AG04449 (cell line): ENCODE measurements at regions of chr7 and their contacts with region 1.

Region 1: DNA sequence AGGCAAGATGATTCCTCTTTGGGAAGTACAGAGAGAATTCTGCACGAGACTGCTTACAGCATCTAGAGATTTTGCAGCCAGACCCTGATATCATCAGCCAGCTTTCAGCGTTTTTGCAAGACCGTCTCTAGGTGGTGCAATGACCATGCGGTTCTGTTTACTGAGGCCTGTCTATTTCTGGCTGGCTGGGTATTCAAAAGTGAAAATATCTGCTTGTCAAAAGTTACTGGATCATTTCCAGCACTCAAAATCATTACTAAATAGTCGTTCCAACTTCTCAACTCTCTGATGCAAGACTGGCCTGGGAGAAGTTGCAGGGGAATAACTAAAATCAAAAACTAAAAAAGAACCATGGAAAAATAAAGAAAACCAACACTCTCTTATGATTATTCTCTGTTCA is 240.1 kb downstream of the ELMO1 start:
- DNase-seq: peak; percentile 46
- H3K4me3 ChIP-seq: no peak overlapping the region
- CTCF ChIP-seq: peak; percentile 34

Region 2: GRCh38 chr7:37833107-37833817 is 624.7 kb after region 1 on chr7:
- CTCF ChIA-PET with region 1: interaction called, 16 read pairs
- POLR2A ChIA-PET with region 1: no interaction called
- DNase-seq: no peak
- H3K4me3 ChIP-seq: peak overlapping the region; percentile 48
- CTCF ChIP-seq: peak; percentile 47